CD8-positive, alpha-beta T cell (primary cell): ENCODE measurements at regions of chr3 and their contacts with region 1.

Region 1: GRCh38 chr3:196317687-196318467 is at the start of gene DYNLT2B:
- DNase-seq: peak; percentile 73 to 95 (median 84)
- ATAC-seq: peak; percentile 90
- H3K4me3 ChIP-seq: peak within 1 kb of the TSS; percentile 79 to 81
- H3K4me3 Mint-ChIP-seq: peak within 1 kb of the TSS; percentile 92
- H3K27ac ChIP-seq: peak within 1 kb of the TSS; percentile 87 to 89
- H3K27ac Mint-ChIP-seq: peak within 1 kb of the TSS; percentile 96
- H3K4me1 ChIP-seq: no peaks in the 10 kb centered on the region
- H3K4me1 Mint-ChIP-seq: peaks cover 15% of the 10 kb centered on the region
- H3K27me3 ChIP-seq: no peaks in the 10 kb centered on the region
- H3K27me3 Mint-ChIP-seq: no peaks in the 10 kb centered on the region
- CTCF ChIP-seq: no peak
- total RNA-seq, gene DYNLT2B: 1.1 to 3.0 TPM

Region 2: DNA sequence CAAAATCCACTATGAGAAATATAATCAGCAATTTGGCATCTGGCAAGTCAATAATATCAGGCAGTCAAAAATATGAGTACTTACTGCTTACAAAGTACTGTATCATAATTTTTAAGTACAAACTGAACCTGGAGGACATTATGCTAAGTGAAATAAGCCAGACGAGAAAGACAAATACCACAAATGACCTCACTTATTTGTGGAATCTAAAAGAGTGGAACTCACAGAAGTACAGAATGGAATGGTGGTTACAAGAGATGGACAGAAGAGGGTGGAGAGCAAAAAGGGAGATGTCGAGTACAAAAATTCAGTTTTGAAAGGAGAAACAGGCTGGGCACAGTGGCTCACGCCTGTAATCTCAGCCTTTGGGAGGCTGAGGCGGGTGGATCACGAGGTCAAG is 42.8 kb before region 1 on chr3:
- CTCF ChIA-PET with region 1: no interaction called
- POLR2A ChIA-PET with region 1: interaction called, 3 read pairs
- intact Hi-C with region 1: loop called in 1 of 2 experiments (anchors 5 kb)
- DNase-seq: peak in 1 of 9 experiments; percentile 11
- ATAC-seq: no peak
- H3K4me3 ChIP-seq: peak overlapping the region in 1 of 2 experiments; percentile 34
- H3K4me3 Mint-ChIP-seq: peak overlapping the region; percentile 72
- H3K27ac ChIP-seq: peak overlapping the region; percentile 43 to 94
- H3K27ac Mint-ChIP-seq: peak overlapping the region; percentile 93
- H3K4me1 ChIP-seq: peaks cover 13% of the 10 kb centered on the region
- H3K4me1 Mint-ChIP-seq: peaks cover 29% of the 10 kb centered on the region
- H3K27me3 ChIP-seq: no peaks in the 10 kb centered on the region
- H3K27me3 Mint-ChIP-seq: no peaks in the 10 kb centered on the region
- CTCF ChIP-seq: no peak

Region 3: GRCh38 chr3:196287440-196288148 is 30.3 kb before region 1 on chr3 and contains the start of gene PCYT1A:
- CTCF ChIA-PET with region 1: interaction called, 3 read pairs
- POLR2A ChIA-PET with region 1: no interaction called
- intact Hi-C with region 1: loop called (anchors 1 kb)
- DNase-seq: peak; percentile 25 to 90 (median 71)
- ATAC-seq: peak; percentile 86
- H3K4me3 ChIP-seq: peak within 1 kb of the TSS; percentile 96 to 97
- H3K4me3 Mint-ChIP-seq: peak within 1 kb of the TSS; percentile 100
- H3K27ac ChIP-seq: peak within 1 kb of the TSS; percentile 86 to 90
- H3K27ac Mint-ChIP-seq: peak within 1 kb of the TSS; percentile 97
- H3K4me1 ChIP-seq: peaks cover 25% of the 10 kb centered on the region
- H3K4me1 Mint-ChIP-seq: peaks cover 46% of the 10 kb centered on the region
- H3K27me3 ChIP-seq: no peaks in the 10 kb centered on the region
- H3K27me3 Mint-ChIP-seq: no peaks in the 10 kb centered on the region
- CTCF ChIP-seq: no peak
- total RNA-seq, gene PCYT1A: 47.9 to 48.8 TPM

Region 4: DNA sequence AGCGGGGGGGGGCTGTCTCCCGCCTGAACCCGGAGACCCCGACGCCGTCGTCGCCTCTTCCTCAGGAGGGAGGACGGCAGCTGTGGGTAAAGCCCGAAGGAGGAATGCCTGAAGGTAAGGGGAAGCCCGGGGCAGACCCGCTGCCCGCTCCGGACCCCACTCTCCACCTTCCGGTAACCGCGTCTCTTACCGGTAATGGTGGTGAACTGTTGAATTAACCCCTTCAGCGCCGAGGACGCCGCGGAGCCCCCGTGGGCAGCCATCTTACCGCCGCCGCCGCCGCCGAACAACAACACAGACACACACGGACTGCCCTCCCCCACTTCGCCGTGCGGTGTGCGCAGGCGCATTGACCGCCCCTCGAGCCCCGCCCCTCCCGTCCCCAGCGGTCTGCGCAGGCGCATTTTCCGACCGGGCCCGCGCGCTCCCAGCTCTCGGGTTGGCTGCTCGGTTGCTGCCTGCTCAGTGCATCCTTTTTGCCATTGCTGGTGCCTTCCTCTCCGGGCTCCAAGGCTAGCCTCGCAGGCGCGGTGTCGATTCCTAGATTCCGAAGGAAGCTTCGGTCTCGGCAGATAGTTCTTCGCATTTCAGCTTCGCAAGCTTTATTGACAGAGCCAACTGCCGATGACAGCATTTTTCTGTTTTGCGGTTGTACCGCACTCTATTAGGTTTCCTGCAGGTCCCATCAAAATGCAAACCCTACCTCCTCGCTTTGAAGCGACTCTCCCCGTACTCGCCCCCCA is 114.4 kb after region 1 on chr3 and contains the start of gene UBXN7:
- CTCF ChIA-PET with region 1: no interaction called
- POLR2A ChIA-PET with region 1: interaction called, 11 read pairs
- intact Hi-C with region 1: loop called (anchors 1 kb)
- DNase-seq: peak; percentile 94 to 99 (median 97)
- ATAC-seq: peak; percentile 86
- H3K4me3 ChIP-seq: peak within 1 kb of the TSS; percentile 60 to 77
- H3K4me3 Mint-ChIP-seq: peak within 1 kb of the TSS; percentile 76
- H3K27ac ChIP-seq: peak within 1 kb of the TSS; percentile 80 to 85
- H3K27ac Mint-ChIP-seq: peak within 1 kb of the TSS; percentile 97
- H3K4me1 ChIP-seq: peaks cover 13% of the 10 kb centered on the region
- H3K4me1 Mint-ChIP-seq: peaks cover 29% of the 10 kb centered on the region
- H3K27me3 ChIP-seq: no peaks in the 10 kb centered on the region
- H3K27me3 Mint-ChIP-seq: no peaks in the 10 kb centered on the region
- CTCF ChIP-seq: no peak
- total RNA-seq, gene UBXN7: 72.5 to 80.1 TPM